ENCODE measurements at regions of chr16 and their contacts with region 1.

Region 1: GRCh38 chr16:4795829-4796572 is 832 bp downstream of the SMIM22 start:
- DNase-seq: no peak
- ATAC-seq: no peak
- H3K4me3 Mint-ChIP-seq: no peak overlapping the region
- H3K27ac Mint-ChIP-seq: no peak overlapping the region
- H3K4me1 Mint-ChIP-seq: peaks cover 7% of the 10 kb centered on the region
- H3K27me3 Mint-ChIP-seq: no peaks in the 10 kb centered on the region
- CTCF ChIP-seq: no peak

Region 2: GRCh38 chr16:4746991-4747574 is 48.9 kb before region 1 on chr16:
- CTCF ChIA-PET with region 1: no interaction called
- POLR2A ChIA-PET with region 1: interaction called, 12 read pairs
- DNase-seq: no peak
- ATAC-seq: no peak
- H3K4me3 Mint-ChIP-seq: no peak overlapping the region
- H3K27ac Mint-ChIP-seq: no peak overlapping the region
- H3K4me1 Mint-ChIP-seq: peaks cover 20% of the 10 kb centered on the region
- H3K27me3 Mint-ChIP-seq: no peaks in the 10 kb centered on the region; the same call in 1 of the 2 replicates
- CTCF ChIP-seq: no peak

Measured in WTC11 (cell line).